WTC11 (cell line): ENCODE measurements at regions of chr11 and their contacts with region 1.

Region 1: DNA sequence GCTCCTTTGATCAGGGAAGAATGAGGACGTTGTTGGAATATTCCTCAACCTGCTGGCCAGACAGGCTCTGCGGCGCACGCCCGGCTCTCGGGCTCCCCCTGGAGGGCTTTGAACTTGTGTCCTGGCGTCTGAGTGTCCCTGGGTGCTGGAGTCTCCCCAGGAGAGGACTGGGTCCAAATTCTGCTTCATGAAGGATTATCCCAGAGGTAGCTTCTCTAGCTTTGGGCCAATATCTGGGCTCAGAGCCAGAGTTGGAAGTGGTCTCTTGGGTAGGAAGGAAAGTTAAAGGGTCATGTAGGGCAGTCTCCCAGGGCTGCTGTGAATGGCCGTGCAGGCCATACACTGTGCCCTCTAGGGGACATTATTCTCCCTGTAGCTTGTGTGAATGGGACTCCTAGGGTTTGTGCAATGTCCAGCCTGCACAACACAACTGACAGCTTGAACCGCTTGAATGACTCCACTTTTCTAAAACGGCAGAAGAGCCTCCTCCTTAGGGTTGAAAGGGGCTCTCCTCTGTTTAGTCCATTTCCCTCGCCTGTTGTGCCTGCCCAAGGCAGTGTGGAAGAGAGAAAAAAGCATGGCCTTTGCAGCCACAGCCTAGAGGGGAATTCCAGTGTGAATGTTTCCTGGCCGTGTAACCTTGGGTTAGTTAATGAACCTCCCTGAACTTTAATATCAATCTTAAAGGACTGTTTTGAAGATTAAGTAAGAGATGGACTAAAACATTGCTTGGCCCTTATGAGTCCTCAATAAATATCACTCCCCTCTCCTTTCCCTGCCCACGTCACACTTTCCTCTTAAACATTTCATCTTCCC is 111.2 kb upstream of the THY1 start:
- DNase-seq: peak; percentile 91
- ATAC-seq: peak; percentile 90
- H3K4me3 Mint-ChIP-seq: no peak overlapping the region
- H3K27ac Mint-ChIP-seq: 0 out of 2 replicates have a peak overlapping the region, but pooled peaks have one; percentile 25
- H3K4me1 Mint-ChIP-seq: peaks cover 6% of the 10 kb centered on the region
- H3K27me3 Mint-ChIP-seq: peaks cover 13% of the 10 kb centered on the region; the same call in 1 of the 2 replicates
- CTCF ChIP-seq: peak; percentile 89

Region 2: GRCh38 chr11:119320624-119321524 is 213.3 kb before region 1 on chr11:
- CTCF ChIA-PET with region 1: no interaction called
- POLR2A ChIA-PET with region 1: no interaction called
- DNase-seq: peak; percentile 71
- ATAC-seq: peak; percentile 11
- H3K4me3 Mint-ChIP-seq: peak overlapping the region; percentile 75
- H3K27ac Mint-ChIP-seq: peak overlapping the region; percentile 45; the same call in 1 of the 2 replicates
- H3K4me1 Mint-ChIP-seq: peaks cover 44% of the 10 kb centered on the region
- H3K27me3 Mint-ChIP-seq: peaks cover 26% of the 10 kb centered on the region
- CTCF ChIP-seq: no peak

Region 3: DNA sequence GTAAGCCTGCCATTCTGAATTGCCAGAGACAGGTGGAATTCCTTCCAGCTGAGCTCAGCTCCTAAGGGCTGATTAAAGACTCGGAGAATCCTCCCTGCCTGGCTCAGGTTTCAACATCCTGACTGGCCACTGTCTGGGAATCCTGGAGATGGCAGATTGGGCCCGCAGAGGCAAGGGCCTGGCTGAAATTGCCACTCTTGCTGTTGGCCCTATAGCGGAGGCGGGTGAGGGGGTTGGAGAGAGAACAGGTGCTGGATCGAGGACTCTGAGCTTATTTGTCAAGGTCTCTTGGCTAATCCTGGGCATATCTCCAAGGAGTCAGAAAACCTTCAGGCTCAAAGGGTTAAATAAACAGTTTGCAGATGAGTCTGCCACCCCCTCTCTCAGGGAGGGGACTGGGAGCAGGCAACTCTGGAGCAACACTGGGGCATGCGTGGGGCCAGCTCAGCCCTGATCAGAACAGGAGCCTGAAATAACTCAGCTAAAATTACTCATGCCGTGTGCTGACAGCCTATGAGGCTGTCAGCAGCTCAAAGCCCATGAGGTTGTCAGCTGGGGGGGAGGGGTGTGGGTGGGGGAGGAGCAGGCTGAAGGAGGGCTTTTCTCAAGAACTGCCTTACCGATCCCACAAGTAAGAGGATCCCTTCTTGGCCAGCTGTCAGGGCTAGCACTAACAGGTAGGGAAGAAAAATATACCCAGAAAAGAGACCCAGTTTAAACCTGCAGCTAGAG is 172.9 kb before region 1 on chr11:
- CTCF ChIA-PET with region 1: no interaction called
- POLR2A ChIA-PET with region 1: no interaction called
- DNase-seq: peak; percentile 66
- ATAC-seq: peak; percentile 57
- H3K4me3 Mint-ChIP-seq: peak overlapping the region; percentile 43
- H3K27ac Mint-ChIP-seq: peak overlapping the region; percentile 96
- H3K4me1 Mint-ChIP-seq: peaks cover 46% of the 10 kb centered on the region
- H3K27me3 Mint-ChIP-seq: peaks cover 51% of the 10 kb centered on the region
- CTCF ChIP-seq: no peak

Region 4: GRCh38 chr11:119481021-119481666 is 53.0 kb before region 1 on chr11:
- CTCF ChIA-PET with region 1: interaction called, 16 read pairs
- POLR2A ChIA-PET with region 1: no interaction called
- DNase-seq: peak; percentile 93
- ATAC-seq: peak; percentile 70
- H3K4me3 Mint-ChIP-seq: peak overlapping the region; percentile 47
- H3K27ac Mint-ChIP-seq: no peak overlapping the region
- H3K4me1 Mint-ChIP-seq: peaks cover 28% of the 10 kb centered on the region
- H3K27me3 Mint-ChIP-seq: peaks cover 16% of the 10 kb centered on the region
- CTCF ChIP-seq: peak; percentile 99

Region 5: DNA sequence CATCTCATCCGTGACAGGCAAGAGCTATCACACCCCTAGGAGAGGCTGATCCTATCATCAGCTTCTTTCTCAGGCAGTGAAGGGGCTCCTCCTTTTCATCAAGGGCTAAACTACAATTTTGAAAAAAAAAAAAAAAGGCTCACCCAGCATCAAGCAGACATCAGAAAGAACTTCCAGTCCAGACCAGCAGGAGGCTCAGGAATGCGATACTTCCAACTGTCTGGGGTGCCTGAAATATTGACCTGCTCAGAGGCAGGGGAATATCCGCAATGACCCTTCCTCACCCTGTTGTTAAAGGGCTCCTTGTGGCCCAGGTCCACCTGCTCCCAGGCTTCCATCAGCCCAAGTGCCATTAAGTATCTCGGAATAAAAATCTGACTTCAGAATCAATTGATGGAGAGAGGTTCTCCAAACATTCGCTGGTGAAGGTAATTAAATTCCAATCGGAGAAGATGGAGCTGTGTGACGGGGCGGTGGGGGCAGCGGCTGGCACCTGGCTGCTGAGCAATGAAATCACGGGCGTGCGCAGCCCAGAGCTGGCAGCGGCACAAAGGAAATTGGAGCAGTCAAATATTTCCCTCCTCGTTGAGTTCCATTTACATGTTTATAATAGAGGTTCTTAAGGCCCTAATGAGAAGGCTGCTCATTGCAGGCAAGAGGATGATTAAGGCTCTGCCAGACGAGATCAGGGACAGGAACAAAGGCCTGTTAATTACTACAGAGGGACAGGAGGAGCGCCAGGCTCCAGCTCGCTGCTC is 42.2 kb before region 1 on chr11:
- CTCF ChIA-PET with region 1: interaction called, 14 read pairs
- POLR2A ChIA-PET with region 1: no interaction called
- DNase-seq: no peak
- ATAC-seq: peak; percentile 20
- H3K4me3 Mint-ChIP-seq: no peak overlapping the region
- H3K27ac Mint-ChIP-seq: no peak overlapping the region
- H3K4me1 Mint-ChIP-seq: peaks cover 23% of the 10 kb centered on the region
- H3K27me3 Mint-ChIP-seq: no peaks in the 10 kb centered on the region
- CTCF ChIP-seq: no peak

Region 6: GRCh38 chr11:119501777-119502405 is 32.2 kb before region 1 on chr11:
- CTCF ChIA-PET with region 1: interaction called, 10 read pairs
- POLR2A ChIA-PET with region 1: no interaction called
- DNase-seq: no peak
- ATAC-seq: peak; percentile 69
- H3K4me3 Mint-ChIP-seq: no peak overlapping the region
- H3K27ac Mint-ChIP-seq: no peak overlapping the region
- H3K4me1 Mint-ChIP-seq: peaks cover 58% of the 10 kb centered on the region
- H3K27me3 Mint-ChIP-seq: peaks cover 4% of the 10 kb centered on the region
- CTCF ChIP-seq: no peak

Region 7: GRCh38 chr11:119518746-119519730 is 15.1 kb before region 1 on chr11:
- CTCF ChIA-PET with region 1: interaction called, 20 read pairs
- POLR2A ChIA-PET with region 1: no interaction called
- DNase-seq: peak; percentile 77
- ATAC-seq: peak; percentile 71
- H3K4me3 Mint-ChIP-seq: no peak overlapping the region
- H3K27ac Mint-ChIP-seq: no peak overlapping the region
- H3K4me1 Mint-ChIP-seq: peaks cover 4% of the 10 kb centered on the region
- H3K27me3 Mint-ChIP-seq: peaks cover 5% of the 10 kb centered on the region; the same call in 1 of the 2 replicates
- CTCF ChIP-seq: no peak

Region 8: DNA sequence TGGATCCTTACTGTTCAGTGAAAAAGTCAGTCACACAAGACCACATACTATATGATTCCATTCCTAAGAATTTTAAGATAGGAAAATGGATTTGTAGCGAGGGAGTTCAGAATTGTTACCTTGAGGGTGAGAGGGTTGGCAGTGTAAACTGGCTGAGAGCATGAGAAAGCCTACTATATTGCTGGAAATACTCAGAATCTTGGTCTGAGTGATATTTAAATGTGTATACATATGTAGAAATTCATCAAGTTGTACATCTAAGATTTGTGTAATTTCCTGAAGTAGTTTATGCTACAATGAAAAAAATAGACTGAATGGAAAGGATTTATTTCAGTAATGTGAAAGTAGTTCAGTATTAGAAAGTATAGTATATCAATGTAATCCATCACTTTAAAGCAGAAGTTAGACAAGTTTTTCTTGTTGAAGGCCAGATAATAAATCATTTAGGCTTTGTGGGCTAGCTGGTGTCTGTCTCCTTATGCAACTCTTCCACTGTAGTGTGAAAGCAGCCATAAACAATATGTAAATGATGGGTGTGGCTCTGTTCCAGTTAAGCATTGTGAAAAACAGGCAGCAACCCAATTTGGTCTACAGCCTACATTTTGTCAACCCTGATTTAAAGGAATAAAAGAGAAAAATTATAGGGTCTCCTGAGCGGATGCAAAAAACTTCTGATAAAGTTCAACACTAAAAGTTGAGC is 16.1 kb after region 1 on chr11:
- CTCF ChIA-PET with region 1: interaction called, 13 read pairs
- POLR2A ChIA-PET with region 1: no interaction called
- DNase-seq: no peak
- ATAC-seq: no peak
- H3K4me3 Mint-ChIP-seq: no peak overlapping the region
- H3K27ac Mint-ChIP-seq: no peak overlapping the region
- H3K4me1 Mint-ChIP-seq: peaks cover 10% of the 10 kb centered on the region
- H3K27me3 Mint-ChIP-seq: no peaks in the 10 kb centered on the region
- CTCF ChIP-seq: no peak

Region 9: GRCh38 chr11:119572481-119573424 is 38.6 kb after region 1 on chr11:
- CTCF ChIA-PET with region 1: interaction called, 18 read pairs
- POLR2A ChIA-PET with region 1: no interaction called
- DNase-seq: peak; percentile 36
- ATAC-seq: peak; percentile 68
- H3K4me3 Mint-ChIP-seq: no peak overlapping the region
- H3K27ac Mint-ChIP-seq: no peak overlapping the region
- H3K4me1 Mint-ChIP-seq: peaks cover 10% of the 10 kb centered on the region
- H3K27me3 Mint-ChIP-seq: peaks cover 6% of the 10 kb centered on the region
- CTCF ChIP-seq: no peak